Activated naive CD4-positive, alpha-beta T cell treated with anti-CD3 and anti-CD28 coated beads for 36 hours (primary cell): ENCODE measurements at regions of chr7 and their contacts with region 1.

Region 1: GRCh38 chr7:150668472-150668911 is 17.0 kb upstream of the GIMAP2 start:
- DNase-seq: peak; percentile 71
- H3K4me3 Mint-ChIP-seq: peak overlapping the region; percentile 19
- H3K27ac Mint-ChIP-seq: peak overlapping the region; percentile 95
- H3K4me1 Mint-ChIP-seq: peaks cover 88% of the 10 kb centered on the region
- H3K27me3 Mint-ChIP-seq: no peaks in the 10 kb centered on the region

Region 2: GRCh38 chr7:150567169-150567568 is 101.3 kb before region 1 on chr7 and contains the start of gene GIMAP4:
- CTCF ChIA-PET with region 1: interaction called, 3 read pairs
- intact Hi-C with region 1: loop called (anchors 1 kb)
- DNase-seq: peak; percentile 64
- H3K4me3 Mint-ChIP-seq: peak within 1 kb of the TSS; percentile 85
- H3K27ac Mint-ChIP-seq: peak within 1 kb of the TSS; percentile 96
- H3K4me1 Mint-ChIP-seq: peaks cover 66% of the 10 kb centered on the region
- H3K27me3 Mint-ChIP-seq: no peaks in the 10 kb centered on the region
- total RNA-seq, gene GIMAP4: 180 to 193 TPM

Region 3: DNA sequence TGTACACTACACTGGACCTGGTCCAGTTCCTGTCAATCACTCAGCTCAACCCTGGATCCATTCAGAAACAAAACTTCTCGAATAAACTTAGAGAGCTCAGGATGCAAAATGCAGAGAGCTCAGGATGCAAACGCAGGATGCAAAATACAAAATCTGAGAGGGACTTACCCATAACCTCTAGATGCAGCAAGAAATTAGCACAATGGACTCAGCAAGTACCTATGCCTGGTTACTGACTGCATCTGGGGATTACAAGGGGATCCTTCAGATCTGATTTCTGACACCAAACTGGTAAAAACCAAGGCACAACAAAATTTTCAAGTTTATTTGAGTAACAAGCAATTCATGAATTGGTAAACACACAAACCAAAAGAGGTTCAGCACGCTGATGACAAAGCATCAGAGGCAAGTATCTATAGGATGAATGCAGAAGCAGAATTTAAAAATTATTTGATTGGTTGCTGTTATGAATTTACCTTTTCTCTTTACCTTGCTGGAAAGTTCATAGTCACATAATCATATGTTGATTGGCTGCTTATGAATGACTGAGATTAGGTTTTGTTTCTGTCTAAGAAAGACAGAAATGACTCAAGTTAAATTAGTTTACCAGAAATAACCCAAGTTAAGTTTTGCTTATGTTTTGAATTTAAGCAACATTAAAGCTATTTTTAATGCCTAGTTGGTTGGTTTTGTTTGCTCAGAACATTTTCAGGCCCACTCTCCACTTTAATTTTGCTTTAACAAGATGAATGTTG is 47.7 kb before region 1 on chr7:
- CTCF ChIA-PET with region 1: interaction called, 4 read pairs
- intact Hi-C with region 1: loop called (anchors 1 kb)
- DNase-seq: peak; percentile 10
- H3K4me3 Mint-ChIP-seq: peak overlapping the region; percentile 8
- H3K27ac Mint-ChIP-seq: peak overlapping the region; percentile 82
- H3K4me1 Mint-ChIP-seq: peaks cover 53% of the 10 kb centered on the region
- H3K27me3 Mint-ChIP-seq: no peaks in the 10 kb centered on the region

Region 4: GRCh38 chr7:150648353-150649079 is 20.0 kb before region 1 on chr7:
- CTCF ChIA-PET with region 1: interaction called, 4 read pairs
- intact Hi-C with region 1: loop called (anchors 1 kb)
- DNase-seq: no peak
- H3K4me3 Mint-ChIP-seq: no peak overlapping the region
- H3K27ac Mint-ChIP-seq: peak overlapping the region; percentile 62
- H3K4me1 Mint-ChIP-seq: peaks cover 56% of the 10 kb centered on the region
- H3K27me3 Mint-ChIP-seq: no peaks in the 10 kb centered on the region

Region 5: DNA sequence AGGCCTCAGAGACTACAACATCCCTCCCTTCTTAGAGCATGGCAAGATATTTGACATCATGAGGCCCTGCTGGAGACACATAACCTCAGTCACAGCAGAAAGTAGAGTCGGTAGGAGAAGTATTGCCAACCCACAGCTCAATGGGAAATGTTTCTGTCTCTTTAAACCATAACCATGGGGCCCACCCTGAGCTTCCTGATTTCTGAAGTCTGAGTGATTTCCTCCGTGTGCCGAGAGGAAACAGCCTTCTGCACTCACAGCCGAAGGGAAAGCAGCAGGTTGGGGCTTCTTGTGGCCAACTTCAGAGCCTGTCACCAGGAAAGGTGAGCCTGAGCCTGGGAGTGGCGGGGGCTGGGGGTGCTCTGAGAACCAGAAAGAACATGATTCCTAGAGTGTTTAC is 47.9 kb after region 1 on chr7 and contains the start of gene GIMAP1:
- CTCF ChIA-PET with region 1: interaction called, 4 read pairs
- intact Hi-C with region 1: loop called (anchors 1 kb)
- DNase-seq: peak; percentile 81
- H3K4me3 Mint-ChIP-seq: peak within 1 kb of the TSS; percentile 97
- H3K27ac Mint-ChIP-seq: peak within 1 kb of the TSS; percentile 92
- H3K4me1 Mint-ChIP-seq: peaks cover 62% of the 10 kb centered on the region
- H3K27me3 Mint-ChIP-seq: no peaks in the 10 kb centered on the region
- total RNA-seq, gene GIMAP1: 5.1 to 5.3 TPM

Region 6: DNA sequence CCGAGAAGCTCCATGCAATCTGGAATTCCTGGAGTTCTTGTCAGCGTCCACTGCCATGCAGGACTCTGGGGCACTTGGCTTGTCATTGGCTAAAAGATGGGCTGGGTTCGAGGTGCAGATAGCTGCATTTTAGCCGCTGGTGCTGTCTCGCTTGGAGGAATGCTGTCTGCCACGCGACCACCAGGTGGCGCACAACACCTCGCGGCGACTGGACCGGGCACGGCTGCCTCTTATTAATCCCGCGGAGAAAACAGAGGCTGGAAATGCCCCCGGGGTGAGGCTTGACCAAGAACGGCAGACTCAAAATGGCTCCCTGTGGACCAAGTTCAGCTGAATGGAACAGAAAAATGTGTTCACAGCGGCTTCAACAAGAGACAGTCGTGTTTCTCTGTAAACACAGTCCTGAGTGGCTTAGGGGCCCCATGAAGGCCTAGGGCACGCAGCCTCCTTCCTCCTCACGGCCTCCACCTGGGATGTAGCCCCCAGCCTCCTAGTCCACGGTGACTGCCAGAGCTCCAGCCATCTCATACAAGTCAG is 230.1 kb after region 1 on chr7:
- CTCF ChIA-PET with region 1: no interaction called
- intact Hi-C with region 1: no loop called
- DNase-seq: peak; percentile 86
- H3K4me3 Mint-ChIP-seq: no peak overlapping the region
- H3K27ac Mint-ChIP-seq: no peak overlapping the region
- H3K4me1 Mint-ChIP-seq: peaks cover 2% of the 10 kb centered on the region
- H3K27me3 Mint-ChIP-seq: peaks cover 20% of the 10 kb centered on the region